ENCODE measurements at regions of chr12 and their contacts with region 1.

Region 1: GRCh38 chr12:57242693-57243454 is 8.1 kb downstream of the STAC3 start:
- DNase-seq: peak in 1 of 2 donors; percentile 41
- H3K4me3 ChIP-seq: peak overlapping the region; percentile 23 to 67 (median 52)
- H3K27ac ChIP-seq: peak overlapping the region in 1 of 2 donors; percentile 32
- H3K4me1 ChIP-seq: peaks cover 19 to 20% of the 10 kb centered on the region in 2 donors
- H3K27me3 ChIP-seq: peaks cover 3 to 35% of the 10 kb centered on the region in 2 donors
- CTCF ChIP-seq: peak; percentile 1 to 21 (median 17)
- POLR2A ChIP-seq: no peak

Region 2: DNA sequence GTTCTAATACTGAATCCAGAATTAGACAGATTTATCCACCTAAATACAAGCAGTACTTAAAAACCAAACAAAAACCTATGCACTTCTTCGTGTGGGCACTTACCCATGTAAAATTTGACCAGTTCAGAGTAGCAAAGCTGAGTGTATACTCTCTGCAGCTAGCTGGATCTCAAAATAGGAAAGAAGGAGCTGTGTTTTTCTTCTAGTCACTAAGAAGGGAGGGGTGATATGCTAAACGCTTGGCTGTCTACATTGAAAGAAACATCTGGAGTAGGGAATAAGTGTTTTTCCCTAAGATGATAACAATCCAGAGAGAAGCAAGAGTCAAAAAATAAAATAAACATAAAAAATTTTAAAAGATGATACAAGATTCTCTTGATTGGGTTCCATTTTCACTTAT is 701.2 kb before region 1 on chr12:
- intact Hi-C with region 1: no loop called
- DNase-seq: no peak
- H3K4me3 ChIP-seq: no peak overlapping the region
- H3K27ac ChIP-seq: no peak overlapping the region
- H3K4me1 ChIP-seq: no peaks in the 10 kb centered on the region
- H3K27me3 ChIP-seq: no peaks in the 10 kb centered on the region
- CTCF ChIP-seq: no peak
- POLR2A ChIP-seq: no peak

Region 3: DNA sequence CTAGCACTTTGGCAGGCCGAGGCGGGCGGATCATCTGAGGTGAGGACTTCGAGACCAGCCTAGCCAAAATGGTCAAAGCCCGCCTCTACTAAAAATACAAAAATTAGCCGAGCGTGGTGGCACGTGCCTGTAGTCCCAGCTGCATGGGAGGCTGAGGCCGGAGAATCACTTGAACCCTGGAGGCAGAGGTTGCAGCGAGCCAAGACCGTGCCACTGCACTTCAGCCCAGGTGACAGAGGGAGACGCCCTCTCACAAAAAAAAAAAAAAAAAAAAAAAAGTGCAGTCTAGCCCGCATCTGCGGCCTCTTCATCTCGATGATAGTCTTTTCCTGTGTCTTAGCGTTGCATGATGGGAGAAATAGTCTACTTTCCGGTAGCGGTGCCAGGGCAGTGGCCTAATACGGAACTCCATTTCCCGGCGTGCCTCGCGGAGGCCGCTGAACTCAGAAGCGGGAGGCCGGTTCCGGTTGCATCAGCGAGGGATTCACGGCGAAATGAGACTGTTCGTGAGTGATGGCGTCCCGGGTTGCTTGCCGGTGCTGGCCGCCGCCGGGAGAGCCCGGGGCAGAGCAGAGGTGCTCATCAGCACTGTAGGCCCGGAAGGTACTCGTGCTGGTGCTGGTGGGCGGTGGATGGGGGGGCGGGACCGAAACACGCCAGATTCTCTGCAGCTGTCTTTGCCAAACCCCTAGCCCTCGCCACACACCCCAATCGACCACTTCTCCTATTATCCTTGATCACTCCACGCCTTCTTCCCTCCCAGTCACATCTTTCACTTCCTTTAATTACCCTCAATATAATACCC is 244.9 kb after region 1 on chr12 and contains the start of gene MARS1:
- intact Hi-C with region 1: no loop called
- DNase-seq: peak; percentile 91 to 93
- H3K4me3 ChIP-seq: peak within 1 kb of the TSS; percentile 74 to 100 (median 95)
- H3K27ac ChIP-seq: peak within 1 kb of the TSS; percentile 83 to 89
- H3K4me1 ChIP-seq: peaks cover 0 to 12% of the 10 kb centered on the region in 2 donors
- H3K27me3 ChIP-seq: no peaks in the 10 kb centered on the region
- CTCF ChIP-seq: peak in 1 of 3 donors; percentile 19
- POLR2A ChIP-seq: no peak
- total RNA-seq, gene MARS1: 39.2 to 65.9 (median 60.2) TPM

Region 4: GRCh38 chr12:57744777-57745484 is 502.1 kb after region 1 on chr12 and contains the start of gene TSPAN31:
- intact Hi-C with region 1: no loop called
- DNase-seq: peak; percentile 98
- H3K4me3 ChIP-seq: peak within 1 kb of the TSS; percentile 86 to 87 (median 87)
- H3K27ac ChIP-seq: peak within 1 kb of the TSS; percentile 99 to 100
- H3K4me1 ChIP-seq: peaks cover 0 to 8% of the 10 kb centered on the region in 2 donors
- H3K27me3 ChIP-seq: no peaks in the 10 kb centered on the region
- CTCF ChIP-seq: peak; percentile 13 to 32 (median 23)
- POLR2A ChIP-seq: no peak
- total RNA-seq, gene TSPAN31: 55.5 to 107 (median 73.1) TPM

Region 5: DNA sequence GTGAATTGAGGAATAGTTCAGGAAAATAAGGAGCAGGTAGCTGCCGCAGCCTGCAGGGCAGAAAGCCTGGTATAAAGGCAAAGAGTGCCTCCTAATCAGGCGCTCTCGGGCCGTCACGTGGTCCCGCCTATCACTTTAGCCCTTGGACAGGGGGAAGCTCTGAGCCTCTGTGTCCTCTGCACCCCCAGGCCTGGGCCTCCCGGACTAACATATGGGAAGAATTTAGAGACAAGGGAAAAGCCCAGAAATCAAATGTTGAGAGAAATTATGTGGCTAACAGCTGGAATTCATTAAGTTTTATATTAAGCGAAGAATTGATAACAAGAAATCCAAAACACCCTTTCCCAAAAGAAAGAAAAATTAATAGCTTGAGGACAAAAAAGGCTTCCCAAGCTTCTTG is 1116.2 kb after region 1 on chr12:
- intact Hi-C with region 1: loop called (anchors 10 kb)
- DNase-seq: no peak
- H3K4me3 ChIP-seq: no peak overlapping the region
- H3K27ac ChIP-seq: no peak overlapping the region
- H3K4me1 ChIP-seq: no peaks in the 10 kb centered on the region
- H3K27me3 ChIP-seq: no peaks in the 10 kb centered on the region
- CTCF ChIP-seq: no peak
- POLR2A ChIP-seq: no peak

Measured in breast epithelium (tissue), 4 donors.